ENCODE measurements at regions of chr12 and their contacts with region 1.

Region 1: GRCh38 chr12:57590536-57591479 is at the start of gene PIP4K2C:
- DNase-seq: peak; percentile 94
- H3K4me3 Mint-ChIP-seq: peak within 1 kb of the TSS; percentile 89
- H3K27ac Mint-ChIP-seq: peak within 1 kb of the TSS; percentile 76
- H3K4me1 Mint-ChIP-seq: peaks cover 25% of the 10 kb centered on the region
- H3K27me3 Mint-ChIP-seq: peaks cover 3% of the 10 kb centered on the region
- total RNA-seq, gene PIP4K2C: 21.5 and 23.0 TPM in 2 replicates

Region 2: DNA sequence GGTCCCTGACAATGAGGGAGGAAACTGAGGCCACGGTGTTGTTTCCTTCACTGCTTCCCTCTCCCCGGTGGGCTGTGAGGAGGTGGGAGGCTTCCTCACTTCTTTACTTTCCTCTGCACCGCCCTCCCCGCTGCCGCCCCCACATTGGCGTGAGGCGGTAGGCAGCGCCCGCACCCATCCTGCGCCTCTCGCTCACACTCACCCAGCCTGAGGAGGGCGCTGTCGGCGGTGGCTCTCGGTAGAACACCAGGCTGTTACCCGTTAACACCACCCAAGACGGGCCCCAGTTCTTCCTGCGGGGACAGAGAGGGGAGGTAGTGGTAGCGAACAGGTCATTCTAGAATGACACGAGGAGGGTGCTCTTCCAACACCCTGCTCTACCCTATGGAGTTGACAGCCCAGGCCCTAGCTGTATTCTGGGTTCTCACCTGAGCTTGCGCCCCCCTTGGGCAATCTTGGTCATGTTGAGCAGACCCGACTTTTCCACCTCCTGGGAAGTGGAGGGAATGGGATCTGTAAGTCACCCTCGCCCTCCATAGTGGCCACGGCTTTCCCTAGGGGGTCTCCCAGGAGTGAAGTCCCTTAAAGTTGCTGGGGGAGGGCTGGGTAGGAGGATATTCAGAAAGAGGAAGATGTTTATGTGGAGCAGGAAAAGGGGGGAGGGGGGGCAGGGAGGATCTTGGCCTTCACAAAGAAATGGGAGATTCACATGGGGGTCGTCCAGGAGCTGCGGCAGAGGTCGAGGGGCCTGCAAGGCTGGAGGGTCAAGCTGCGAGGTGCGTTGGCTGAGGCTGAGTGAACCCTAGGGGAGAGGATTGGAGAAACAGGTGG is 114.4 kb before region 1 on chr12:
- intact Hi-C with region 1: loop called (anchors 2 kb)
- DNase-seq: peak; percentile 93
- H3K4me3 Mint-ChIP-seq: peak overlapping the region; percentile 96
- H3K27ac Mint-ChIP-seq: peak overlapping the region; percentile 97
- H3K4me1 Mint-ChIP-seq: peaks cover 68% of the 10 kb centered on the region
- H3K27me3 Mint-ChIP-seq: no peaks in the 10 kb centered on the region

Region 3: GRCh38 chr12:57604454-57604991 is 13.7 kb after region 1 on chr12 and contains the start of gene DTX3:
- intact Hi-C with region 1: loop called (anchors 1 kb)
- DNase-seq: peak; percentile 83
- H3K4me3 Mint-ChIP-seq: peak within 1 kb of the TSS; percentile 84
- H3K27ac Mint-ChIP-seq: peak within 1 kb of the TSS; percentile 89
- H3K4me1 Mint-ChIP-seq: peaks cover 25% of the 10 kb centered on the region
- H3K27me3 Mint-ChIP-seq: peaks cover 2% of the 10 kb centered on the region
- total RNA-seq, gene DTX3: 15.9 and 18.3 TPM in 2 replicates

Region 4: GRCh38 chr12:57621497-57622292 is 30.9 kb after region 1 on chr12:
- intact Hi-C with region 1: loop called (anchors 2 kb)
- DNase-seq: peak; percentile 89
- H3K4me3 Mint-ChIP-seq: peak overlapping the region; percentile 88
- H3K27ac Mint-ChIP-seq: peak overlapping the region; percentile 43
- H3K4me1 Mint-ChIP-seq: peaks cover 22% of the 10 kb centered on the region
- H3K27me3 Mint-ChIP-seq: peaks cover 96% of the 10 kb centered on the region

Region 5: GRCh38 chr12:57632694-57633477 is 42.1 kb after region 1 on chr12 and contains the start of gene B4GALNT1:
- intact Hi-C with region 1: loop called (anchors 2 kb)
- DNase-seq: peak; percentile 92
- H3K4me3 Mint-ChIP-seq: peak within 1 kb of the TSS; percentile 84
- H3K27ac Mint-ChIP-seq: no peak within 1 kb of the TSS
- H3K4me1 Mint-ChIP-seq: peaks cover 10% of the 10 kb centered on the region
- H3K27me3 Mint-ChIP-seq: peaks cover 59% of the 10 kb centered on the region
- total RNA-seq, gene B4GALNT1: 4.6 and 5.7 TPM in 2 replicates

Measured in activated CD4-positive, alpha-beta T cell treated with anti-CD3 and anti-CD28 coated beads, Interleukin-2, amount 10 ng/mL, durations not matched to agents 24 days and 14 days (primary cell).